Activated CD4-positive, alpha-beta memory T cell treated with anti-CD3 and anti-CD28 coated beads for 36 hours (primary cell): ENCODE measurements at regions of chr3 and their contacts with region 1.

Region 1: DNA sequence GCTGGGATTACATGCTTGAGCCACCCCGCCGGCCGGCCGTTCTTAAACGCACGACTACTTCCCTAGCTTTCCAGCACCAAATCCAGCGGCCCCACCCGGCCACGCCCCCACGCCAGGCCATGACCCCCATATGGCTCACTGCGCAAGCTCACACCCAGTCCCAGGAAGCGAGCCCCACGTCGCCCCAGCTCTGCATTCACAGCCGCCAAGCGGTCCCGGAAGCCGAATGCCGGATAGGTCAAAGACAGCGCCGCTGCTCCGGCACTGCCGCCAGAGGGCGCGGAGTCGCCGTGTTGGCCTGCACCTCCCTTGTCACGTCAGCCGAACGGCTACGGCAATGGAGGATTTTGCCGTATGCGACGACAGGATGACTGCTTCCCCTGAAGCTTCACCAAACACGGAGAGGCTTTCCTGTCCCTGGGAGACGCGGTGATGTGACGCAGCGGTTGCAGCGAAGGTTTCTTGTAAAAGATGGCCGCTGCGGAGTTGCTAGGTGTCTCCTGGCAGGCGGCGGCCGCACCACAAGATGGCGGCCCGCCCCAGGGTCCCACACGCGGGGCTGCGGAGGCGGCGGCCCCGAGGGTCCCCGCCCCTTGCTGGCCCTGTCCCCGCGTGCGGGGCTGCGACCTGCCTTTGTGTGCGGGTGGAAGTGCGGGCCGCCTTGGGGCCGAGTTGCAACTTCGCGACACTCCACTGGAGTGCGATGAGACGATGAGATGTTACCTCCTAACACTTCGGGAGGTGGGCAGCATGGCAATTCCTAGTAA is 30.2 kb upstream of the RPN1 start:
- DNase-seq: peak; percentile 98
- H3K4me3 Mint-ChIP-seq: peak overlapping the region; percentile 91
- H3K27ac Mint-ChIP-seq: peak overlapping the region; percentile 97
- H3K4me1 Mint-ChIP-seq: peaks cover 21% of the 10 kb centered on the region
- H3K27me3 Mint-ChIP-seq: no peaks in the 10 kb centered on the region

Region 2: GRCh38 chr3:128170805-128171516 is 509.8 kb before region 1 on chr3:
- CTCF ChIA-PET with region 1: no interaction called
- POLR2A ChIA-PET with region 1: no interaction called
- intact Hi-C with region 1: no loop called
- DNase-seq: peak; percentile 21
- H3K4me3 Mint-ChIP-seq: no peak overlapping the region
- H3K27ac Mint-ChIP-seq: no peak overlapping the region
- H3K4me1 Mint-ChIP-seq: peaks cover 13% of the 10 kb centered on the region
- H3K27me3 Mint-ChIP-seq: no peaks in the 10 kb centered on the region

Region 3: DNA sequence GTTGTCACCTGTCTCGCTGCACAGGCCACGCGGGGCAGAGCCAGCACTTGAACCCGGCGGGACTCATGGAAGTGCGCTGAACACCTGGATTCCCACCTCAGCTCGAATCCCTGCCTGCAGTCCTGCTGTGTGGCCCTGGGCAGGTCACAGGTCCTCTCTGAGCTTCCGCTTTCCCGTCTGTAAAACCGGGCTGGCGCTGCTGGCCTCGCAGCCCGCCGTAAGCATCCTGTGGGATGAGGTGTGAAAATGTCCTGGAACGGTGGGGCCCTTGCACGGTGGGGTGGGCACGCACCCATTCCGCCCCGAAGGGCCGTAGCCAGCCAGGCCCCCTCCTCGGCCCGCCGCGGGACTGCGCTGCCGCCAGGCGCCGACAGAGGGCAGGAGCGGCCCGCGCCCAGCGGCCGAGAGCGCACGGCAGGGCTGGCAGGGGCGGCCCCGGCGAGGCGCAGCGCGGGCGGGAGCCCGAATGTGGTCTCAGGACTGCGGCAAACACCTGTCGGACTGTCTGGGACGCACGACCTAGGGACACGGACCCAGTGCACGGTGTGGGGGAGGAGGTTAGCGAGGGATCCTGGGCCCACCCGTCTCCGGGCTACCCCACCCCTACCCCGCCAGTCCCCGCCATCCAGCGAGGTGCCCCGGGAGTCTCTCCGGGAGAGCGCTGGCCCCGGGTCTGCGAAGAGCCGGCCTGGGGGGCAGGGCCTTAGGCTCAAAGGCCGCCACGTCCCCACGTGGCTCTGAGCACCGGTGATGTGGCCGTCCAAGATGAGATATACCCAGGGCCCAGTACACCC is 254.5 kb before region 1 on chr3:
- CTCF ChIA-PET with region 1: no interaction called
- POLR2A ChIA-PET with region 1: no interaction called
- intact Hi-C with region 1: no loop called
- DNase-seq: peak; percentile 62
- H3K4me3 Mint-ChIP-seq: no peak overlapping the region
- H3K27ac Mint-ChIP-seq: no peak overlapping the region
- H3K4me1 Mint-ChIP-seq: no peaks in the 10 kb centered on the region
- H3K27me3 Mint-ChIP-seq: peaks cover 20% of the 10 kb centered on the region

Region 4: DNA sequence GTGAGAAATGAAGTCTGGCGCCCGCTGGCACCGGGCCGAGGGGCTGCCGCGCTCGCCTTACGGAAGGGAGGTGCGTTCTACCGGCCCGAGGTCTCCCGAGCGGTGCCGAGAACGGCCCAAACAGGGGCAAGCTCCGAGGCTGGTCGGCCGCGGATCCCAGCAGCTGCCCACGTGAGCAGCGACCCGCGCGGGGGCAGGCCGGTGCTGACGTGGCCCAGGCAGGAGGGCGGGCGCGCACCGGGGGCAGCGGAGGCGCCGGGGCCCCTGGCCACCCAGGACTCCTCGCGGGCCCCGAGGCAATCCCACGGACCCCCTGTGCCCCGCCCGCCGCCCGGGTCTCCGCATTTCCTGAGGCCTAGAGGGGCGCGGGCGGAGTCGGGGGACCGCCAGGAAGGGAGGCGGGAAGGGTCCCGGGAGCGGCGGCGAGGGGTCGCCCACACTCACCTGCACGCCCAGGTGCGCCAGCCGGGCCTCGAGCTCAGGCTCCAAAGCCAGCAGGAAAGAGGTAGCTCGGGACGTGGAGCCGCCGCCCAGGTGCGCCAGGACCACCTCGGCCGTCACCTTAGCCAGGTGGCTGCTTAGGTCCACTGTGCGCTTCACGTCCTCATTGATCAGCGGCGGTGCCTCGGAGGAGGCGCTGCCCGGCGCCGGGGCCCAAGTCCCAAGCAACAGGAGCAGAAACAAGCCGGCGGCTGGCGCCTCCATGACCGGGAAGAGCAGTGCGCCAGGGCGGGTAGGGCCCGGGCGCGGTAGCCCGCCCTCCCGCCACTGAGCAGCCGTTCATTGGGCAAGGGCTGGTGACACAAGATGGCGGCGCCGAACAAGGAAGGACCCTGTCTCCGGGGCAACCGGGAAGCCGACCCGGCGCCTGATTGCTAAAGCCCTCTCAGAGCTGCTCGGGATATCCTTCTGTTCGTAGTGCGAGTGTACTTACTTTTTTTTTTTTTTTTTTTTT is 30.4 kb before region 1 on chr3 and contains the start of gene RPN1:
- CTCF ChIA-PET with region 1: interaction called, 22 read pairs
- POLR2A ChIA-PET with region 1: interaction called, 17 read pairs
- intact Hi-C with region 1: loop called (anchors 1 kb)
- DNase-seq: peak; percentile 97
- H3K4me3 Mint-ChIP-seq: peak within 1 kb of the TSS; percentile 87
- H3K27ac Mint-ChIP-seq: peak within 1 kb of the TSS; percentile 89
- H3K4me1 Mint-ChIP-seq: peaks cover 37% of the 10 kb centered on the region
- H3K27me3 Mint-ChIP-seq: no peaks in the 10 kb centered on the region
- total RNA-seq, gene RPN1: 166 to 168 TPM

Region 5: GRCh38 chr3:128725932-128726690 is 45.3 kb after region 1 on chr3 and contains the start of gene RAB7A:
- CTCF ChIA-PET with region 1: interaction called, 16 read pairs
- POLR2A ChIA-PET with region 1: interaction called, 3 read pairs
- intact Hi-C with region 1: loop called (anchors 1 kb)
- DNase-seq: peak; percentile 99
- H3K4me3 Mint-ChIP-seq: peak within 1 kb of the TSS; percentile 93
- H3K27ac Mint-ChIP-seq: peak within 1 kb of the TSS; percentile 87
- H3K4me1 Mint-ChIP-seq: peaks cover 50% of the 10 kb centered on the region
- H3K27me3 Mint-ChIP-seq: no peaks in the 10 kb centered on the region
- total RNA-seq, gene RAB7A: 264 to 272 TPM

Region 6: DNA sequence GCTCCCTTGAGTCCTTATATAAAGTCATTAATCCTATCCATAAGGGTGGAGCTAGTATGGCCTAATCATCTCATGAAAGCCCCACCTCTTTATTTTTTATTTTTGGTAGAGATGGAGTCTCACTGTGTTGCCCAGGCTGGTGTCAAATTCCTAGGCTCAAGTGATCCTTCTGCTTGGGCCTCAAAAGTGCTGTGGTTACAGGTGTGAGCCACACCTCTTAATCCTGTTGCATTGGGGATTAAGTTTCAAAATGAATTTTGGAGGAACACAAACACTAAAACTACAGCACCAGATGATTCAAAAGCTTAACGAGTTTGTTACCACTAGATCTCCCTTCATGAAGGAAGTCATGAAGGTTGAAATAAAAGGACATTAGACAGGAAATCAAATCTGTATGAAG is 72.9 kb after region 1 on chr3:
- CTCF ChIA-PET with region 1: interaction called, 11 read pairs
- POLR2A ChIA-PET with region 1: interaction called, 4 read pairs
- intact Hi-C with region 1: no loop called
- DNase-seq: no peak
- H3K4me3 Mint-ChIP-seq: no peak overlapping the region
- H3K27ac Mint-ChIP-seq: no peak overlapping the region
- H3K4me1 Mint-ChIP-seq: peaks cover 53% of the 10 kb centered on the region
- H3K27me3 Mint-ChIP-seq: no peaks in the 10 kb centered on the region

Region 7: DNA sequence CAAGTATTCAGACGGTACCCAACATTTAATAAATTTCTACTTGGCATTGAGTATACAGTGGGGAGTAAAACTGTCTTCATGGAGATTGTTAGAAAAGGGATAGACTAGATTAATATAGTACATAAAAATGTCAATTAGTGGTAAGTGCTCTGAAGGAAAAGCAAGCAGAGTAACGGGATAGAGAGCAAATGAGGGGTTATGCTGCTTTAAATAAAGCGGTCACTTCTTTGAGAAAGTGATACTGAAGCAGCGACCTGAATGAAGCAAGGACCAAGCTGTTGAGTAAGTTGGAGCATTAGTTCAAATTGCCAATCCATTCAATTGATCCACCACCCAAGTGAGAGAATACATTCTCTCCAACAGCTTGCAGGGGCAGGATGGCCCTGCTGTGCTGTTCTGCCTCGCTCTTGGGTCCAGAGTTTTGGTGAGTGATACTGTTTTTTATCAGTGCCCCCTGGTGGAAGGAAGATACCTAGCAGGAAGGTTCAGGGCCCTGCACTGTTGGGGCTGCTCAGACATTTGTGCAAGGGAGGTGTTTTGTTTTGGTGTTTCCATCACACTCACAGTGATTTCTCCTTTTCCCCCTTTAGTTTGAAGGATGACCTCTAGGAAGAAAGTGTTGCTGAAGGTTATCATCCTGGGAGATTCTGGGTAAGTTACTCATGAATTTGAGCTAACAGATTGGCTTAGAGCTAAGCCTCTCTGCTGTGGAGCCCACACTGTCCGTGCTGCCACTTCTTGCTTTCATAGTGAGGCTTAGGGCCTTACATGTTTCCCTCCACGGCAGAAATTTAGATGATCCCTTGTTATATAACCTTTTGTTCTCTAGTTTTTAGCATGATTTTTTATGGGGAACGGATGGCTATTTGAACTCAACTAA is 114.2 kb after region 1 on chr3:
- CTCF ChIA-PET with region 1: interaction called, 114 read pairs
- POLR2A ChIA-PET with region 1: interaction called, 20 read pairs
- intact Hi-C with region 1: loop called (anchors 1 kb)
- DNase-seq: peak; percentile 72
- H3K4me3 Mint-ChIP-seq: peak overlapping the region; percentile 36
- H3K27ac Mint-ChIP-seq: peak overlapping the region; percentile 93
- H3K4me1 Mint-ChIP-seq: peaks cover 86% of the 10 kb centered on the region
- H3K27me3 Mint-ChIP-seq: no peaks in the 10 kb centered on the region

Region 8: DNA sequence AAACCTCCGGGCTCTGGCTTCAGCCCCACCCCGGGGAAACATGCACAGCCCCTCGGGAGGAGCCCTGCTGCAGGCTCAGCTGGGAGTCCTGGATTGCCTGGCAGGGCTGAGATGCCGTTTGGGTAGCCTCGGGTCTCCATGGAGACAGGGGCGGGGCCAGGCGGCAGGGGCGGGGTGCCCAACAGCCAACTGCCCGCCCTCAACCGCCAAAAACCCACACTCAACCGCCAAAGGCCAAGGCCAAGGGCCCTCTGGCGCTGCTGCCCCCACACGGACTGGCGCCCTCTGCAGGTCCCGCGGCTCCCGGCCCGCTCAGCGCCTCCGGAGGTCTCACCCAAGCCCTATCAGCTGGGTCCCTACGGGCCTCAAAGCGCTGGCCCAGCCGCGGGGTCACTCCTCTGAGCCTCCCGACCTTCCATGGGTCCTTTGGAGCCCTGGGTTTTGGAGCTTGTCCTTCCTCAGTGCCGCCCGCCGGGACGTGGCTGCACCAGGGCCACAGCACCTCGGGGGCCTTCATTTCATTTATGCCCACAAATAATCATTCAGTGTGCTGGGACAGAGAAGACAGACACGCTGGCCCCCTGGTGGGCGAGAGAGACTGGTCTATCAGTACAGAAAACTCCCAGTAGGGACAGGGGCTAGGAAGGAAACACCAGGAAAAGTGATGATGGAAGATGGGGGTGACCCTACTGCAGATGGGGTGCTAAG is 165.1 kb after region 1 on chr3:
- CTCF ChIA-PET with region 1: interaction called, 43 read pairs
- POLR2A ChIA-PET with region 1: interaction called, 4 read pairs
- intact Hi-C with region 1: loop called (anchors 1 kb)
- DNase-seq: peak; percentile 92
- H3K4me3 Mint-ChIP-seq: peak overlapping the region; percentile 45
- H3K27ac Mint-ChIP-seq: peak overlapping the region; percentile 84
- H3K4me1 Mint-ChIP-seq: peaks cover 18% of the 10 kb centered on the region
- H3K27me3 Mint-ChIP-seq: no peaks in the 10 kb centered on the region

Region 9: DNA sequence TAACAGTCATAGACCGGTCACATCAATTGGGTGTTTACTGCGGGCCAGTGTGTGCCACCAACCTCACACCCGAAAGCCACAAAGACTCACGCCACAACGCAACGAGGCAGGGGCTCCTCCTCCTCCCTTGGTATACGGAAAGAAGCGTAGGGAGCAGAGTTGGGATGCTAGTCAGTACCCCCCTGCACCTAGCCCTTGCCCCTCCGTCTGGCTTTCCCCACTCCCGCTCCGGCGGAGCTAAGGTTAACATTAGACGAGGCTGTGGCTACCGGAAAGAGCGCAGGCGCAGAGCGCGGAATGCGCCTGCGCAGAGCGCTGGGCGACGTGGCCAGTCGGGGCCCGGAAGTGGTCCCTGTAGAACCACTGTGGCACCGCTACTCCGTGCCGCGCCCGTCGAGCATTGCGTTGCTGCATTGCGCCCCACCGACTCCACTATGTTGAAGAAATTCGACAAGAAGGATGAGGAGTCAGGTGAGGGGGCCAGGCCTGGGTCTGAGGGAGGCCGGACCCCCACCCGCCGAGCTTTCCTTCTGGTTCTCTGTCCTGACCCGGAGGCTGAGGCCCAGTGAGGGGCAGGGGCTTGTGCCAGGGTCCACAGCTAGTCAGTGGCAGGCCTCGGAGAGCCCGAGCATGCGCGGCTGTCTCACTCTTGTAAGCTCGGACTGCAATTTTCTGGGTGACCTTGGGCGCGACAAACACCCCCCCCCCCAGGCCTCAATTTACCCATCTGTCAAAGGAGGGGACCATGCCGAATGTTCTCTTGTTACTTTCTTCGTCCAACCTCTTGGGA is 568.7 kb after region 1 on chr3 and contains the start of gene COPG1:
- CTCF ChIA-PET with region 1: no interaction called
- POLR2A ChIA-PET with region 1: no interaction called
- intact Hi-C with region 1: no loop called
- DNase-seq: peak; percentile 92
- H3K4me3 Mint-ChIP-seq: peak within 1 kb of the TSS; percentile 89
- H3K27ac Mint-ChIP-seq: peak within 1 kb of the TSS; percentile 93
- H3K4me1 Mint-ChIP-seq: peaks cover 38% of the 10 kb centered on the region
- H3K27me3 Mint-ChIP-seq: no peaks in the 10 kb centered on the region
- total RNA-seq, gene COPG1: 154 to 162 TPM